Aorta (tissue), 5 donors: ENCODE measurements at regions of chr13 and their contacts with region 1.

Region 1: GRCh38 chr13:109156181-109156935 is 526.9 kb downstream of the MYO16 start:
- DNase-seq: peak; percentile 63 to 86
- ATAC-seq: peak; percentile 63
- H3K4me3 ChIP-seq: no peak overlapping the region
- H3K27ac ChIP-seq: peak overlapping the region; percentile 34 to 97
- H3K4me1 ChIP-seq: peaks cover 3 to 7% of the 10 kb centered on the region in 2 donors
- H3K27me3 ChIP-seq: no peaks in the 10 kb centered on the region

Region 2: DNA sequence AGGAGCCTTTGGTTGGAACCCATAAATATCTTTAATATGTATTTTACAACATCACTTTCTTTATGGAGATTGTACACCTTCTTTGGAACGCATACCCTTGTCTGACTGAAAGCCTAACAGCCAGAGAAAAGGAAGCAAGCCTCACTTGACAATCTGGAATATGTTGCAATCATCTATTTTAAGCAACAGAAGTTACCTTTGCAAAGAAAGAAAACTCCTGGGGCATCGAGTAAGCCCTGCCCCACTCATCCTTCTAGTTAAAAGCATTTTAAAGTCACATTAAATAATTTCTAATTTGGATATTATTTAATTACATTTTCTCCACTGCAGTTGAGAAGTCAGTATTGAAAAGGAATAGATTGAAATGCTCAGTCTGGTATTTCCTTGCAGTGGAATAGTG is 15.8 kb after region 1 on chr13:
- intact Hi-C with region 1: loop called in 1 of 2 experiments (anchors 2 kb)
- DNase-seq: no peak
- ATAC-seq: no peak
- H3K4me3 ChIP-seq: no peak overlapping the region
- H3K27ac ChIP-seq: no peak overlapping the region
- H3K4me1 ChIP-seq: no peaks in the 10 kb centered on the region
- H3K27me3 ChIP-seq: no peaks in the 10 kb centered on the region

Region 3: DNA sequence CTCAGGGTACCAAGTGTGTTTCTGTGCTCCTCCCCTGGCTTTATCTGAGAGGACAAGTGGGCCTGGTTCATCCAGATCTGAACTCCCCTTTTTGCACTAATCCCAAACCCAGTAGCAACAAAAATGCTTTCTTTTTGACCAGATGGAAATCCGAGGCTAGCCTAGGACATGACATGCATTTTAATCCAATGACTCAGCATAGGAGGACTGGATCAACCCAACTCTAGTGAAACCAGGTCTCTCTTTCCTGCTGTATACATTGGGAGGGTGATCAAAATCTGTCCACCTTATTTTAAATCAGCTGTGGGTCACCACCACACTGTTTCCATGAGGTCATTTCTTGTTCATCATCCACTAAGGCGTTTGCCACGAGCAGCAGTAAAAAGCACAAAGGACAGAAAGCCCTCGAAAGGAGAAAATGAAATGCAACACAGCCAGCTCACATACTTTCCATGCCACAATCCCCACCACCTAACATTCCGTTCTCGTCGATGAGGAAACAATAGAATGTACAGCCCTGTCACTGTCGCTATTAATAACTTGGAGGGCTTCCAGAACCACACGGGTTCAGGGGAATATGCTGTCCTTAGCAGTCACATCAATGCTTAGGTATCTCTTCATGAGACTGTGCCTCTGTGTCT is 87.1 kb after region 1 on chr13:
- intact Hi-C with region 1: loop called in 1 of 2 experiments (anchors 5 kb)
- DNase-seq: no peak
- ATAC-seq: peak; percentile 50
- H3K4me3 ChIP-seq: peak overlapping the region in 1 of 2 donors; percentile 18
- H3K27ac ChIP-seq: peak overlapping the region; percentile 49 to 97
- H3K4me1 ChIP-seq: peaks cover 1 to 2% of the 10 kb centered on the region in 2 donors
- H3K27me3 ChIP-seq: no peaks in the 10 kb centered on the region

Region 4: DNA sequence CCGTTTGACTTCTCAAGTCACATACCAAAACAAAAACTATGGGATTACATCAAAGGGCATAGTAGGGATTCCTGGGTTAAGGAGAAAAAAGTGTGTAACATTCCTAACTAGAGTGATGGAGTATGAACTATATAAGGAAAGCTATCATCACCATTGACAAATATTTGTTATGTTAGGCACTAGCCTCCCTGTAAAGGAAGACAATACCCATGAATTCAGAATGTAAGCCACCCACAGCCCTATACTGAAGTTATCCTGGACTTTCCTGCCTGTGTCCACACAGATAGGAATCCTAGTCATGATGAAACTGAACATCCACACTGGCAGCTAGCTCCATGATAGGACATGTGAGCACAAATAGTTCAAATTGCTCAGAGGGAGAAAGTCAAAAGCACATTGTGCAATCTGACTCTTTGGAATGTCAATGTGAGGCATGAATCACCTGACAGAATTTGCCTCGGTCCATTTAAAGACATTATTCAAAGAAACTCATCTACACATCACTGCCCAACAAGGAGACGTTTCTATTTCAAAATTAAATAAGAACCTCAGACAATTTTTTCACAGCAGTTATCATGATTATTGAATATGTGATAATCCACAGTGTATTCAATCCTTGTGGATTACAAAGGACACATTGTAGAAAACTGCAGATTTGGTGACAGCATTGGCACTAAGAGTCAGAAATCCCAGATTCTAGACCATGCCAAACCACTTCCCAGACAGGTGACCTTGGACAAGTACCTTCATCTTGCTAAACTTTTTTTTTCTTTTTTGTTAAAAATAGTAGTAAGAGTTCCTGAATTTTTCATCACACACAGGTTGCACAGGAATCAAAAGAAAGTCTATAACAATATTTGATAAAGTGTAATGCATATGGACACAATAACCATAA is 100.8 kb after region 1 on chr13:
- intact Hi-C with region 1: loop called (anchors 5 kb)
- DNase-seq: no peak
- ATAC-seq: peak; percentile 29
- H3K4me3 ChIP-seq: no peak overlapping the region
- H3K27ac ChIP-seq: peak overlapping the region in 1 of 2 donors; percentile 83
- H3K4me1 ChIP-seq: no peaks in the 10 kb centered on the region
- H3K27me3 ChIP-seq: no peaks in the 10 kb centered on the region

Region 5: DNA sequence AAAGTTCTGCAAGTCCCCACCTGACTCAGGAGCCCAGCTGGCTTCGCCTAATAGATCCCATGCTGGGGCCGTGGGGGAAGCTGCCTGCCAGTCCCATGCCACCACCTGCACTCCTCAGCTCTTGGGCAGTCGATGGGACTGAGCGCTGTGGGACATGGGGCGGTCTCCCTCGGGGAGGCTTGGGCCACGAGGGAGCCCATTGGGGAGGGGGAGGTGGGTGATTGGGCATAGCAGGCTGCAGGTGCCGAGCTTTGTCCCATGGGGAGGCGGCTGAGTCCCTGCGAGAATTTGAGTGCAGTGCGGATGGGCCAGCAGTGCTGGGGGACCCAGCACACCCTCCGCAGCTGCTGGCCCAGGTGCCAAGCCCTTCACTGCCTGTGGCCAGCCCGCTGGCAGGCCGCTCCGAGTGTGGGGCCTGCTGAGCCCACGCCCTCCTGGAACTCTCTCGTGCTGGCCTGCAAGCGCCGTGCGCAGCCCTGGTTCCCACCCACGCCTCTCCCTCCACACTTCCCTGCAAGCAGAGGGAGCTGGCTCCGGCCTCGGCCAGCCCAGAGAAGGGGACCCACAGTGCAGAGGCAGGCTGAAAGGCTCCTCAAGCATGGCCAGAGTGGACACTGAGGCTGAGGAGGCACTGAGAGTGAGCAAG is 162.7 kb after region 1 on chr13:
- intact Hi-C with region 1: no loop called
- DNase-seq: no peak
- ATAC-seq: no peak
- H3K4me3 ChIP-seq: no peak overlapping the region
- H3K27ac ChIP-seq: no peak overlapping the region
- H3K4me1 ChIP-seq: no peaks in the 10 kb centered on the region
- H3K27me3 ChIP-seq: no peaks in the 10 kb centered on the region

Region 6: GRCh38 chr13:109344552-109345157 is 188.3 kb after region 1 on chr13:
- intact Hi-C with region 1: loop called in 1 of 2 experiments (anchors 10 kb)
- DNase-seq: no peak
- ATAC-seq: no peak
- H3K4me3 ChIP-seq: no peak overlapping the region
- H3K27ac ChIP-seq: no peak overlapping the region
- H3K4me1 ChIP-seq: no peaks in the 10 kb centered on the region
- H3K27me3 ChIP-seq: no peaks in the 10 kb centered on the region

Region 7: GRCh38 chr13:109454167-109454917 is 298.0 kb after region 1 on chr13:
- intact Hi-C with region 1: loop called (anchors 5 to 10 kb)
- DNase-seq: peak; percentile 50 to 79
- ATAC-seq: peak; percentile 83
- H3K4me3 ChIP-seq: no peak overlapping the region
- H3K27ac ChIP-seq: peak overlapping the region; percentile 84 to 86
- H3K4me1 ChIP-seq: peaks cover 0 to 9% of the 10 kb centered on the region in 2 donors
- H3K27me3 ChIP-seq: no peaks in the 10 kb centered on the region